Dendritic cell treated with granulocyte-macrophage colony-stimulating factor and Interleukin-4, amounts not matched to agents 40 ng/mL and 50 ng/mL, for 4 days (primary cell): ENCODE measurements at regions of chr6 and their contacts with region 1.

Region 1: DNA sequence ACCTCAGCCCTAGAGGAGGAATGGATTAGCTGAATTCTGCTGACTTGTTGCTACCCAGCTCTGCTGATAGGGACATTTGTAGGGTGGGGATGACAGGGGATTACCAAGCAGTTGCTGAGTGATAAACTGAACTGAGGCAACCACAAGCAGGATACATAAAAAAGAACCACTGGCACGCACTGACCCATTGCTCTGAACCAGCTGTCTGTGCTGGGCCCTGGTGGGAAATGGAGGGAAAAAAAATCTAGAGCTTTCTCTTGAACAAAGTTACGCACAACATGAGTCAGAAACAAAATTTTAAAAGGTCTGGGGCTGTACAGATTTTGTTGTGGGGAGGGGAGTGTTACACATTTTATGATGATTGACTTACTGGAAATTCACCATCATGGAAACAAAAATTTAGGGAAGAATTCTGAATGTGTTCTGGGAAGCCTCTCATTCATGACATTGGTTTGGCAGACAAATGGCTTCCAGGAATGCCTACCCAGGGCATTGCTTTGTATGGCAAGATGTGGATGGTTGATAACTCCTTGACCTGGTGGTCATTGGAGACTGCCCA is 37.7 kb downstream of the FOXO3 start:
- H3K4me3 Mint-ChIP-seq: no peak overlapping the region
- H3K27ac Mint-ChIP-seq: peak overlapping the region; percentile 79
- H3K4me1 Mint-ChIP-seq: peaks cover 41% of the 10 kb centered on the region
- H3K27me3 Mint-ChIP-seq: no peaks in the 10 kb centered on the region

Region 2: GRCh38 chr6:108630050-108630714 is 31.8 kb after region 1 on chr6:
- intact Hi-C with region 1: loop called (anchors 5 kb)
- H3K4me3 Mint-ChIP-seq: no peak overlapping the region
- H3K27ac Mint-ChIP-seq: peak overlapping the region; percentile 2
- H3K4me1 Mint-ChIP-seq: peaks cover 58% of the 10 kb centered on the region
- H3K27me3 Mint-ChIP-seq: no peaks in the 10 kb centered on the region